Activated CD4-positive, alpha-beta T cell treated with anti-CD3 and anti-CD28 coated beads for 36 hours (primary cell): ENCODE measurements at regions of chr4 and their contacts with region 1.

Region 1: GRCh38 chr4:38663801-38664705 is at the start of gene KLF3:
- DNase-seq: peak; percentile 84
- ATAC-seq: peak; percentile 62
- H3K4me3 Mint-ChIP-seq: peak within 1 kb of the TSS; percentile 88
- H3K27ac Mint-ChIP-seq: peak within 1 kb of the TSS; percentile 78
- H3K4me1 Mint-ChIP-seq: peaks cover 61% of the 10 kb centered on the region
- H3K27me3 Mint-ChIP-seq: no peaks in the 10 kb centered on the region
- total RNA-seq, gene KLF3: 6.1 to 6.2 TPM

Region 2: DNA sequence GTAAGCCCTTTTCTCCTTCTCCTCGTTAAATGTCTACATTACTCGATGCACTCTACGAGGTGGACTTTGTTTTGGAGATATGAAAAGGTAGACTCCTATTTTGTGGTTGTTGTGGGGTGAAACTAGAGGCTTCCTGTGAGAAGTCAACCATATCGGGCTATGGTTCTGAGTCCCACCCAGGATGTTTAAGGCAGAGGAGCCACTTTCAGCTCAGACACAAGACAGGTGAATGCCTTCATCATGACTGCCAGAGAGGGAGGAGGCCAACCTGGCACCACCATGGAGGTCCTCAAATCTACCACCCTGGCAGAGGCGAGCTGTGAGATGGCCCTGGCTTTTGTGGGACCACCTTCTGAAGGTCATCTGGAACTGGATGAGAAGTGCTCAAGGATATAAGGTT is 154.5 kb before region 1 on chr4:
- CTCF ChIA-PET with region 1: interaction called, 3 read pairs
- POLR2A ChIA-PET with region 1: no interaction called
- intact Hi-C with region 1: loop called in 1 of 2 experiments (anchors 2 kb)
- DNase-seq: peak; percentile 37
- ATAC-seq: peak; percentile 85
- H3K4me3 Mint-ChIP-seq: peak overlapping the region; percentile 6
- H3K27ac Mint-ChIP-seq: peak overlapping the region; percentile 82
- H3K4me1 Mint-ChIP-seq: peaks cover 82% of the 10 kb centered on the region
- H3K27me3 Mint-ChIP-seq: peaks cover 5% of the 10 kb centered on the region

Region 3: GRCh38 chr4:38523524-38524448 is 140.3 kb before region 1 on chr4:
- CTCF ChIA-PET with region 1: no interaction called
- POLR2A ChIA-PET with region 1: no interaction called
- intact Hi-C with region 1: loop called in 1 of 2 experiments (anchors 2 kb)
- DNase-seq: peak; percentile 76
- ATAC-seq: peak; percentile 88
- H3K4me3 Mint-ChIP-seq: peak overlapping the region; percentile 9
- H3K27ac Mint-ChIP-seq: peak overlapping the region; percentile 58
- H3K4me1 Mint-ChIP-seq: peaks cover 20% of the 10 kb centered on the region
- H3K27me3 Mint-ChIP-seq: peaks cover 4% of the 10 kb centered on the region

Region 4: GRCh38 chr4:38687571-38688011 is 23.5 kb after region 1 on chr4:
- CTCF ChIA-PET with region 1: no interaction called
- POLR2A ChIA-PET with region 1: interaction called, 18 read pairs
- intact Hi-C with region 1: no loop called
- DNase-seq: peak; percentile 39
- ATAC-seq: peak; percentile 97
- H3K4me3 Mint-ChIP-seq: no peak overlapping the region
- H3K27ac Mint-ChIP-seq: peak overlapping the region; percentile 69
- H3K4me1 Mint-ChIP-seq: peaks cover 60% of the 10 kb centered on the region
- H3K27me3 Mint-ChIP-seq: no peaks in the 10 kb centered on the region